ENCODE measurements at regions of chr1 and their contacts with region 1.

Region 1: GRCh38 chr1:27772933-27773825 is at the start of gene STX12:
- DNase-seq: peak; percentile 99
- H3K4me3 ChIP-seq: peak within 1 kb of the TSS; percentile 69
- H3K27ac ChIP-seq: peak within 1 kb of the TSS; percentile 70
- H3K4me1 ChIP-seq: peaks cover 9% of the 10 kb centered on the region
- H3K27me3 ChIP-seq: no peaks in the 10 kb centered on the region
- CTCF ChIP-seq: no peak
- total RNA-seq, gene STX12: 22.5 and 24.5 TPM in 2 replicates

Region 2: GRCh38 chr1:27383039-27383605 is 390.1 kb before region 1 on chr1 and contains the start of gene CD164L2:
- CTCF ChIA-PET with region 1: no interaction called
- POLR2A ChIA-PET with region 1: no interaction called
- intact Hi-C with region 1: no loop called
- DNase-seq: no peak
- H3K4me3 ChIP-seq: no peak within 1 kb of the TSS
- H3K27ac ChIP-seq: no peak within 1 kb of the TSS
- H3K4me1 ChIP-seq: no peaks in the 10 kb centered on the region
- H3K27me3 ChIP-seq: no peaks in the 10 kb centered on the region
- CTCF ChIP-seq: no peak
- total RNA-seq, gene CD164L2: not detected in 2 replicates

Region 3: DNA sequence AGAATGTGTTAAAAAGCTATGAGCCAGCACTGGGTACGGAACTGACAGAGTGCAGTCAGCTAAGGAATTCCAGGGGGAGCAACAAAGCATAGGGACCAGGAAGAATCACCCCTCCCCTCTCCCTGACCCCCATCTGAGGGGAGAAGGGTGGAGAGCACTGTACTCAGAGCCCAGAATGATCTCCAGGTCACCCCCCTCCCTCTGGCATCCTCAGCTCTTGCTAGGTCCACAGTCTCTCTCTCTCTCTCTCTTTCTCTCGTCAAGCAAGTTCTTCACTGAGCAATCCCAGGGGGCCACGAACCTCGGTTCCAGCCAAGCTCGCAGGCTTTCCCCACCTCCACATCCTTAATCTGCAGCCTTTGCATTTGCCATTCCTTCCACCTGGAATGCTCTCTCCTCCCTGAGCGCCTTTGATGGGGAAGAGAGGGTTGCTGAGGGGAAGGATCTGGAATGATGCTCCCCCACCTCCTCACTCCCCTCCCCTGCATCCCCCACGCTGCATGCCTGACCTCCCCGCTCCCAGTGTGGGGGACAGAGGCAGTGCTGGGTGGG is 276.5 kb before region 1 on chr1:
- CTCF ChIA-PET with region 1: no interaction called
- POLR2A ChIA-PET with region 1: interaction called, 11 read pairs
- intact Hi-C with region 1: no loop called
- DNase-seq: peak; percentile 52
- H3K4me3 ChIP-seq: peak overlapping the region; percentile 11
- H3K27ac ChIP-seq: no peak overlapping the region
- H3K4me1 ChIP-seq: peaks cover 4% of the 10 kb centered on the region
- H3K27me3 ChIP-seq: no peaks in the 10 kb centered on the region
- CTCF ChIP-seq: no peak

Region 4: DNA sequence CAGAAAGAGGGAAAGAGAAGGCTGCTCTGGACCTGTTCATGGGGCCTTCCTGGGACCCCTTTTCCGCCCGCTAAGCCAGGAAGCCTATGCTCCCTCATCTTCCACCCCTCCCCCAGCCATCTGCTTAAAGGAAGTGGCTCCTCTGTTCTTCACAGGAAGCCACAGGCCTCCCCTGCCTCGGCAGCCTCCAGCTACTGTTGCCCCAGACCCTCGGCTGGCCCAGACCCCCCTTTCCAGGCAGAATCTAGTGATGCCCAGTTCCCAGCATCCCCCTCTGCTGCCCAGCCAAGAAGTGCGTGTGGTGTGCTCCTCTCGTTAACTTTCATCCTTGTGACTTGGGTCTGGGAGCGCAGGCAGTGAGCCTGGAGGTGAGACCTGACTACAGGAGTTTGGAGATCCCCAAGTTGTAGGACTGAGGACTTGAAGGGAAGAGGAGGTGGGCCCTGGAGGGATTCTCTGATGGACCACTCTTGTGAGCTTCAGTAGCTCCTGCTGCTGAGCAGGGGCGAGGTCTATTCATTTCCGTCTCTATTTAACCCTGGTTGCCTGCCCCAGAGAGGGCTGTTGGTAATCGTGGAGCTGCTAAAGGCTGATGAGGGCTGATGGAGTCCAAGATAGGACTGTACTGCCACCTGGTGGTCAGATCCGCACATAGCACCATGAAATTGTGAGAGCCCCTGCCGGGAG is 110.3 kb before region 1 on chr1:
- CTCF ChIA-PET with region 1: interaction called, 10 read pairs
- POLR2A ChIA-PET with region 1: no interaction called
- intact Hi-C with region 1: no loop called
- DNase-seq: peak; percentile 89
- H3K4me3 ChIP-seq: no peak overlapping the region
- H3K27ac ChIP-seq: peak overlapping the region; percentile 4
- H3K4me1 ChIP-seq: peaks cover 3% of the 10 kb centered on the region
- H3K27me3 ChIP-seq: no peaks in the 10 kb centered on the region
- CTCF ChIP-seq: peak; percentile 88

Region 5: GRCh38 chr1:27682351-27682944 is 90.7 kb before region 1 on chr1:
- CTCF ChIA-PET with region 1: no interaction called
- POLR2A ChIA-PET with region 1: no interaction called
- intact Hi-C with region 1: no loop called
- DNase-seq: no peak
- H3K4me3 ChIP-seq: no peak overlapping the region
- H3K27ac ChIP-seq: no peak overlapping the region
- H3K4me1 ChIP-seq: no peaks in the 10 kb centered on the region
- H3K27me3 ChIP-seq: no peaks in the 10 kb centered on the region
- CTCF ChIP-seq: no peak

Region 6: GRCh38 chr1:27830621-27831424 is 57.6 kb after region 1 on chr1 and contains the start of gene PPP1R8:
- CTCF ChIA-PET with region 1: no interaction called
- POLR2A ChIA-PET with region 1: no interaction called
- intact Hi-C with region 1: no loop called
- DNase-seq: peak; percentile 99
- H3K4me3 ChIP-seq: peak within 1 kb of the TSS; percentile 73
- H3K27ac ChIP-seq: peak within 1 kb of the TSS; percentile 92
- H3K4me1 ChIP-seq: peaks cover 9% of the 10 kb centered on the region
- H3K27me3 ChIP-seq: no peaks in the 10 kb centered on the region
- CTCF ChIP-seq: no peak
- total RNA-seq, gene PPP1R8: 60.9 and 68.8 TPM in 2 replicates

Region 7: GRCh38 chr1:28036431-28036830 is 263.3 kb after region 1 on chr1:
- CTCF ChIA-PET with region 1: no interaction called
- POLR2A ChIA-PET with region 1: interaction called, 13 read pairs
- intact Hi-C with region 1: no loop called
- DNase-seq: no peak
- H3K4me3 ChIP-seq: no peak overlapping the region
- H3K27ac ChIP-seq: no peak overlapping the region
- H3K4me1 ChIP-seq: no peaks in the 10 kb centered on the region
- H3K27me3 ChIP-seq: no peaks in the 10 kb centered on the region
- CTCF ChIP-seq: peak; percentile 28; the same call in 1 of the 2 replicates

Measured in A673 (cell line).